Activated naive CD4-positive, alpha-beta T cell treated with anti-CD3 and anti-CD28 coated beads for 36 hours (primary cell): ENCODE measurements at regions of chr11 and their contacts with region 1.

Region 1: DNA sequence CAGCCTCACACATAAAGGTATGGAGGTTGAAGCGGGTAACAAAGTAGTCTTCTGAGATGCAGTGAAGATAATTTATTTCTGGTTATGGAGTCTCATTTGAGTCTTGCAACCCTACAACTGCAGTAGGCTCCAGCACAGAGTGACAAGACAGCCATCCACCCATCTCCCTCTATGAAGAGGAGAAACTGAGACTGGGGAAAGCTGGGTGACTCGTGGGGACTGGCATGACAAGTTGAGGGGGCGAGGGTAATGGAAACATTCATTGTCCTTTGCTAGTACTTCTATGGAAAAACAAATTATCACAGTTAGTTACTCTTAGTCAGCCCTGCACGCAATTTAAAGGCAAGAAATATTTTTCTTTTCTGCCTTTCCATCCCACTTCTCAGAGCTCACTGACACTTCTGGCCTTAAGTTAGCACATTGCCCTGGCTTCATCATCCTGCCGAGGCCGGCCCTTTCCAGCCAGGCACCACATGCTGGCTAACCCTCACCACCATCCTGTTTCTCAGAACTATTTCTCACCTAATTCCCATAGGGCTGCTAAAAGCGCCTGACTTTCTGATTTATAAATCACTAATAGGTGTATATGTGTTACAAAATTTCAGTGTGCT is 361.1 kb downstream of the ETS1 start:
- DNase-seq: peak; percentile 37
- H3K4me3 Mint-ChIP-seq: no peak overlapping the region
- H3K27ac Mint-ChIP-seq: no peak overlapping the region
- H3K4me1 Mint-ChIP-seq: peaks cover 40% of the 10 kb centered on the region
- H3K27me3 Mint-ChIP-seq: no peaks in the 10 kb centered on the region

Region 2: DNA sequence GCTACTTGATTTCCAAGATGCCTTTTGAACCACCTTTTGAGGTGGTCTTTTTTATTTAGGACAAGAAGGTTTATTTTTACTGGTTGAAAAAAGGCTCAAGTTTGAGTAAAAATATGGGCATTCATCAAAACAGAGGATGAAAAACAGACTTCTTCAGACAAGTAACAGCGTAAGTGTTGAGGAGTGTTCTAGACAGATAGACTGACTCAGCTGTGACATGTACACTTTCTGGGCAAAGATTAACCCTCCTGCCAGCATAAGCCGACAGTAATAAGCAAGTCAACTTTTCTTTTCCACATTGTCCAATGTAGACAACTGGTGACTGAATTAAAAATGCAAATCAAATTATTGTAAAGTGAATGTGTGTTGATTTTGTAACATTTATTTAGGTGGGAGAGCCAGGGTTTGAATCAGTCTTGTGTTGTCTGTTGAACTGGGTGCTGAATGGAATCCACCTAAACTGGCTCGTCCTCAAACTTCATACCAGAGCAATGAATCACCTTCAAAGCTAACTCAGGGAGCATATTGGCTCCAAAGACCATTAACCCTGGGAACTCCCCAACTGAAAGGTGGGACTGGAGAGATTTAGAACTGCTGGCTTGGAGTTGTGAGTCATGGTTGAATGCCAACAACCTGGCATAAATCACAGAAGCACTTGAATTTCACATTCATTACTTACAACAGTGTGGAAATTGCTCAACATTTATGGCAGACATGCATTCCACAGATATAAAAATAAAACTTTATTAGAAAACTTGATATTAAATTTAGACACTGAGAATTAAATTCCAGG is 15.9 kb before region 1 on chr11:
- CTCF ChIA-PET with region 1: no interaction called
- intact Hi-C with region 1: loop called (anchors 2 kb)
- DNase-seq: peak; percentile 46
- H3K4me3 Mint-ChIP-seq: no peak overlapping the region
- H3K27ac Mint-ChIP-seq: no peak overlapping the region
- H3K4me1 Mint-ChIP-seq: peaks cover 17% of the 10 kb centered on the region
- H3K27me3 Mint-ChIP-seq: no peaks in the 10 kb centered on the region

Region 3: DNA sequence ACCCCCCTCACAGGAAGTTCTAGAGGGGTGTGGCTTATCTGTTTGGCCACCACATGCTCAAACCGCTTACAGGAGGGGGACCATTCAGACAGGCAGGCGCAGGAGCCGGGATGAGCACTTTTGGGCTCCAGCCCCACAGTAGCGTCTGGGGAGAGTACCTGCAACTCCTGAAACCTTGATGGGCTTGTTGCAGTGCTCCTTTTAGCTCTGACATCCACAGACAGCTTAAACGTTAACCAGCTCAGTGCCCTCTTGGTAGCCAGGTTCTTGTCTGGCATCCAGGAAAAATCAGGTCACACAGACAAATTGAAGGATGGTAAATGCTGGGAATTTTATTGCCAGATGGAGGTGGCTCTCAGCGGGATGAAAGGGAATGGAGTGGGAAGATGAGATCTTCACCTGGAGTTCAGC is 34.8 kb after region 1 on chr11:
- CTCF ChIA-PET with region 1: no interaction called
- intact Hi-C with region 1: no loop called
- DNase-seq: no peak
- H3K4me3 Mint-ChIP-seq: no peak overlapping the region
- H3K27ac Mint-ChIP-seq: no peak overlapping the region
- H3K4me1 Mint-ChIP-seq: no peaks in the 10 kb centered on the region
- H3K27me3 Mint-ChIP-seq: no peaks in the 10 kb centered on the region